ENCODE measurements at regions of chr17 and their contacts with region 1.

Region 1: GRCh38 chr17:11589716-11590115 is 8.6 kb upstream of the DNAH9 start:
- DNase-seq: no peak
- H3K4me3 ChIP-seq: no peak overlapping the region
- H3K27ac ChIP-seq: no peak overlapping the region
- H3K4me1 ChIP-seq: no peaks in the 10 kb centered on the region
- CTCF ChIP-seq: no peak

Region 2: GRCh38 chr17:11369575-11369974 is 220.1 kb before region 1 on chr17:
- CTCF ChIA-PET with region 1: no interaction called
- POLR2A ChIA-PET with region 1: no interaction called
- intact Hi-C with region 1: no loop called
- DNase-seq: no peak
- H3K4me3 ChIP-seq: no peak overlapping the region
- H3K27ac ChIP-seq: no peak overlapping the region
- H3K4me1 ChIP-seq: no peaks in the 10 kb centered on the region
- CTCF ChIP-seq: no peak

Region 3: DNA sequence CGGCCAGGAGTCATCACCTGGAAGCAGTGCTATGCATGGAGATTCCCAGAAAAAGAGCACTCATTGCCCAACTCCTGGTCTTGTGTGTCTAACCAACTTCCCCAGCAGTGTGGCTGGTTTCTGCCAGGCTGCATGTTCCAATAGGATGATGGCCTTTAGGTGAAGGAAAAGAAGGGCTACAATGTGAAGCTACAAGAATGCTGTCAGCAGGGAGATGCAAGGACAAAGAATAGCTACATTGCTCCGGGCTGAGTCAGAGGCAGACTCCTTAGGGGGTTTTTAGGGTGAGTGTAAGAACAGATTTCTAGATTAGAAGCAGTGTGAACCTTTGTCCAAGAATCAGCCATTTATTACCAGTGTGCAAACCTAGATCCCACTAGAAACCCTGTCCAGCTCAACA is 54.5 kb before region 1 on chr17:
- CTCF ChIA-PET with region 1: no interaction called
- POLR2A ChIA-PET with region 1: no interaction called
- intact Hi-C with region 1: no loop called
- DNase-seq: no peak
- H3K4me3 ChIP-seq: no peak overlapping the region
- H3K27ac ChIP-seq: no peak overlapping the region
- H3K4me1 ChIP-seq: no peaks in the 10 kb centered on the region
- CTCF ChIP-seq: no peak

Region 4: GRCh38 chr17:11644261-11645212 is 54.8 kb after region 1 on chr17:
- CTCF ChIA-PET with region 1: no interaction called
- POLR2A ChIA-PET with region 1: no interaction called
- intact Hi-C with region 1: loop called (anchors 10 kb)
- DNase-seq: peak; percentile 68
- H3K4me3 ChIP-seq: no peak overlapping the region
- H3K27ac ChIP-seq: no peak overlapping the region
- H3K4me1 ChIP-seq: no peaks in the 10 kb centered on the region
- CTCF ChIP-seq: peak; percentile 91

Measured in OCI-LY7 (cell line).